ENCODE measurements at regions of chr5 and their contacts with region 1.

Region 1: GRCh38 chr5:141923448-141924352 is at the start of gene DELE1:
- H3K4me3 Mint-ChIP-seq: peak within 1 kb of the TSS; percentile 73
- H3K27ac Mint-ChIP-seq: peak within 1 kb of the TSS; percentile 96
- H3K4me1 Mint-ChIP-seq: peaks cover 46% of the 10 kb centered on the region
- H3K27me3 Mint-ChIP-seq: no peaks in the 10 kb centered on the region

Region 2: GRCh38 chr5:141968914-141969608 is 45.4 kb after region 1 on chr5 and contains the start of gene RNF14:
- intact Hi-C with region 1: loop called (anchors 2 kb)
- H3K4me3 Mint-ChIP-seq: peak within 1 kb of the TSS; percentile 96
- H3K27ac Mint-ChIP-seq: peak within 1 kb of the TSS; percentile 98
- H3K4me1 Mint-ChIP-seq: peaks cover 31% of the 10 kb centered on the region
- H3K27me3 Mint-ChIP-seq: no peaks in the 10 kb centered on the region